Activated T-helper 2 cell treated with anti-CD3 and anti-CD28 coated beads, Interferon-gamma antibody, Interleukin-2, Interleukin-4, amounts not matched to agents 10 μg/mL and 5 μg/mL and 100 μg/mL, durations not matched to agents 14 hours and 24 hours and 36 hours (primary cell): ENCODE measurements at regions of chr1 and their contacts with region 1.

Region 1: GRCh38 chr1:35180776-35181374 is 12.1 kb downstream of the SFPQ start:
- DNase-seq: no peak
- H3K4me3 Mint-ChIP-seq: peak overlapping the region; percentile 27
- H3K27ac Mint-ChIP-seq: peak overlapping the region; percentile 64
- H3K4me1 Mint-ChIP-seq: peaks cover 53% of the 10 kb centered on the region
- H3K27me3 Mint-ChIP-seq: no peaks in the 10 kb centered on the region

Region 2: GRCh38 chr1:34859446-34860200 is 321.3 kb before region 1 on chr1 and contains the start of gene SMIM12:
- intact Hi-C with region 1: loop called (anchors 5 kb)
- DNase-seq: peak; percentile 86
- H3K4me3 Mint-ChIP-seq: peak within 1 kb of the TSS; percentile 98
- H3K27ac Mint-ChIP-seq: peak within 1 kb of the TSS; percentile 97
- H3K4me1 Mint-ChIP-seq: peaks cover 46% of the 10 kb centered on the region
- H3K27me3 Mint-ChIP-seq: no peaks in the 10 kb centered on the region
- total RNA-seq, gene SMIM12: 58.7 and 59.3 TPM in 2 replicates

Region 3: GRCh38 chr1:35016406-35016805 is 164.5 kb before region 1 on chr1:
- intact Hi-C with region 1: no loop called
- DNase-seq: no peak
- H3K4me3 Mint-ChIP-seq: no peak overlapping the region
- H3K27ac Mint-ChIP-seq: no peak overlapping the region
- H3K4me1 Mint-ChIP-seq: no peaks in the 10 kb centered on the region
- H3K27me3 Mint-ChIP-seq: no peaks in the 10 kb centered on the region

Region 4: DNA sequence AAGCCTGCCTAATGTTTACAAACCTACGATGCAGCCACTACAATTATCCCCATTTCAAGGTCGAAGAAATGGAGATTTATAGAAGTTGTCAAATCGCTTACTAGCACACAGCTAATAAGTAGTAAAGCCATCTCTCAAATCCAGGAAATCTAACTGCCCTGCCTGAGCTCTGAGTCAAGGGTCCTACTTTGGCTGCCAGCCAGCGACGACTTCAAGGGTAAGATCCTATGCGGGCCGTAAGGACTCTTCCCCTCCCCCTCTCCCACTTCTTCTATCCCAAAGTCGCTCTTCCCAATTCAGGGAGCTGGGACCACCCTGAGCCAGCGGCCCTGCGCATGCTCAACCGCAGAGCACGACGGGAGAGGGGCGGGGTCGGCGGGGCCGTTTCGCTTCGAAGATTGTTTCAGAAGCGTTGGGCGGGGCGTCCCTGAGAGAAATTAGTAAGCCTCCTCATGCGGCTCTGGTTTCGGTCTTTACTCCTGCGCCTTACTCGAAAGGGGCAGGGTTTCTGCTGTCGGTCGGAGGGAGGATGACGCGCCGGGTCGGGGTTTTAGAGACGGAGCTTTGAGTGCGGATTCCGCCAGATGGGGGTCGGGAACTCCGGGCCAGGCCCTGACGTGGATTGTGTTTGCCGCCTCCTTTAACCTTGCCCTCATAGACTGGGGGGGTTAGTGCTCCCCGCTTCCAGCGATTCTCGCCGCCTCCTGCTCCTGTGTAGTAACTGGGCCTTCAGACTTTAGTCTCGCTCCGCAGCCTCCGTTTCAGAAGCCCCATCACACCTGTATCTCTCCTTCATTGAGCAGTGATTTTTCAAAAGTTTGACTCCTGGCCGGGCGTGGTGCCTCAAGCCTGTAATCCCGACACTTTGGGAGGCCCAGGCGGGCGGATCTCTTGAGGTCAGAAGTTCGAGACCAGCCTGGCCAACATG is 101.6 kb before region 1 on chr1 and contains the start of gene ZMYM1:
- intact Hi-C with region 1: loop called (anchors 5 kb)
- DNase-seq: peak; percentile 81
- H3K4me3 Mint-ChIP-seq: peak within 1 kb of the TSS; percentile 91
- H3K27ac Mint-ChIP-seq: peak within 1 kb of the TSS; percentile 99
- H3K4me1 Mint-ChIP-seq: peaks cover 32% of the 10 kb centered on the region
- H3K27me3 Mint-ChIP-seq: no peaks in the 10 kb centered on the region
- total RNA-seq, gene ZMYM1: 2.4 and 2.7 TPM in 2 replicates